GM12878 (cell line): ENCODE measurements at regions of chr9 and their contacts with region 1.

Region 1: DNA sequence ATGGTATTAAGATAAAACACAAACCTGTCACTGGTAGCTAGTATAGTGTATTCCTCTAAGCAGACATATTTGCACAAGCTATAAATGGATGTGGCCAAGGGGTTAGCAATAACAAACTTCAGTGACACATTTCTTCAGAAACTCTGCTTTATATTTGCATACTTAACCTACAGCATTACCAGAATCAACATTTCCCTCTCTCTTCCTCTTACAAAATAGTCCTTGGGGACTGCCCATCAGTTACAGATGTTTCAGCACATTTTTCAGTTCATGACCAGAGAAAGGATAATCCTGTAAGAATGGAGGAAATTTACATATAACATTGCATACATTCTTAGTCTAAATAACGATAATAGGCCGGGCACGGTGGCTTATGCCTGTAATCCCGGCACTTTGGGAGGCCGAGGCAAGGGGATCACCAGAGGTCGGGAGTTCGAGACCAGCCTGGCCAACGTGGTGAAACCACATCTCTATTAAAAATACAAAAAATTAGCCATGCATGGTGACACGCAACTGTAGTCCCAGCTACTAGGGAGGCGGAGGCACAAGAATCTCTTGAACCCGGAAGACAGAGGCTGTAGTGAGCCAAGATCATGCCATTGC is 25.3 kb upstream of the SLC1A1 start:
- DNase-seq: peak; percentile 96
- ATAC-seq: peak; percentile 97
- H3K4me3 ChIP-seq: peak overlapping the region; percentile 25; the same call in 1 of the 2 replicates
- H3K27ac ChIP-seq: peak overlapping the region; percentile 98
- H3K4me1 ChIP-seq: peaks cover 21% of the 10 kb centered on the region; the same call in 1 of the 2 replicates
- H3K27me3 ChIP-seq: no peaks in the 10 kb centered on the region
- CTCF ChIP-seq: no peak
- EP300 ChIP-seq: peak; percentile 95 to 98
- POLR2A ChIP-seq: no peak
- RAD21 ChIP-seq: no peak

Region 2: DNA sequence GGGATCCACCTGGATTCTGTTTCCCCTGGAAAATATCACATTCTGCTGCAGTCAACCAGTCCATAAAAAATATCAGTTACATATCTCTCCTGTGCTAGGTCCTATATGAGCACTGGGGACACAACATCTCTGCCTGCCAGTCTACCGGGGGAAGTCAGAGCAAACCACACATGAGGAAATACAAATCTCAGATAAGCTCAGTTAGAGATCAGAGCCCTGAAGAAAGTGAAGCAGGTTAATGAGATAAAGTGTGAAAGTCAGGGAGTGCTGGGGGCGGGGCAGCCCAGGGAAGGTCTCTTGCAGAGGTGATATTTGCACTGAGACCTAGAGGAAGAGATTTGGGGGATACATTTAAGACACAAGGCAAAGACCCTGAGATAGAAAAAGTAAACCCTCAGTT is 42.5 kb before region 1 on chr9:
- CTCF ChIA-PET with region 1: interaction called, 3 read pairs
- POLR2A ChIA-PET with region 1: no interaction called
- RAD21 ChIA-PET with region 1: no interaction called
- SMC1A ChIA-PET with region 1: interaction called, 5 read pairs
- in situ Hi-C with region 1: no loop called
- intact Hi-C with region 1: loop called (anchors 2 kb)
- DNase-seq: no peak
- ATAC-seq: peak; percentile 87
- H3K4me3 ChIP-seq: no peak overlapping the region
- H3K27ac ChIP-seq: no peak overlapping the region; the same call in 1 of the 2 replicates
- H3K4me1 ChIP-seq: peaks cover 25% of the 10 kb centered on the region
- H3K27me3 ChIP-seq: no peaks in the 10 kb centered on the region
- CTCF ChIP-seq: no peak
- EP300 ChIP-seq: no peak
- POLR2A ChIP-seq: no peak
- RAD21 ChIP-seq: peak; percentile 25; the same call in 1 of the 2 replicates

Region 3: GRCh38 chr9:4515958-4516375 is 51.0 kb after region 1 on chr9:
- CTCF ChIA-PET with region 1: interaction called, 3 read pairs
- POLR2A ChIA-PET with region 1: no interaction called
- RAD21 ChIA-PET with region 1: interaction called, 8 read pairs
- SMC1A ChIA-PET with region 1: interaction called, 15 read pairs
- in situ Hi-C with region 1: no loop called
- intact Hi-C with region 1: no loop called
- DNase-seq: peak; percentile 43
- ATAC-seq: peak; percentile 69
- H3K4me3 ChIP-seq: no peak overlapping the region
- H3K27ac ChIP-seq: peak overlapping the region; percentile 75
- H3K4me1 ChIP-seq: peaks cover 46% of the 10 kb centered on the region
- H3K27me3 ChIP-seq: no peaks in the 10 kb centered on the region
- CTCF ChIP-seq: no peak
- EP300 ChIP-seq: peak in 1 of 2 experiments; percentile 44; a peak in 1 of 4 replicates
- POLR2A ChIP-seq: no peak
- RAD21 ChIP-seq: no peak

Region 4: DNA sequence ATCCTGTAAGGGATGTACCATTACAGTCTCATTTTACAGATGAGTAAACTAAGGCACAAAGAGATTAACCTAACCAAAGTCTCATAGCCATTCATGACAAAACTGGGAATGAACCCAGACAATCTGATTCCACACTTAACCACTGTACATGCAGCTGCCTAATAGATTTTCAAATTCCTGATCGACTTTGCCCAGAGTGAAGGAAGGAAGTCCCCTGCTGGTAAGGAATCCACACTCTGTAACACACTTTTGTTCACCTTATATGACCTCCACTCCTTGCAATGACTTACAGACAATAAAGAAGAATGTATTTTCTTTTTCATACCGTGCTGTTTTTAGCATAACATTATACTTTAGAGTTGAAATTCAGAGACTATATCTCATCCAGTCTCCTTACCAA is 165.8 kb after region 1 on chr9:
- CTCF ChIA-PET with region 1: no interaction called
- POLR2A ChIA-PET with region 1: no interaction called
- RAD21 ChIA-PET with region 1: no interaction called
- SMC1A ChIA-PET with region 1: no interaction called
- in situ Hi-C with region 1: no loop called
- intact Hi-C with region 1: no loop called
- DNase-seq: no peak
- ATAC-seq: no peak
- H3K4me3 ChIP-seq: no peak overlapping the region
- H3K27ac ChIP-seq: no peak overlapping the region
- H3K4me1 ChIP-seq: no peaks in the 10 kb centered on the region
- H3K27me3 ChIP-seq: no peaks in the 10 kb centered on the region
- CTCF ChIP-seq: no peak
- EP300 ChIP-seq: no peak
- POLR2A ChIP-seq: no peak
- RAD21 ChIP-seq: no peak

Region 5: DNA sequence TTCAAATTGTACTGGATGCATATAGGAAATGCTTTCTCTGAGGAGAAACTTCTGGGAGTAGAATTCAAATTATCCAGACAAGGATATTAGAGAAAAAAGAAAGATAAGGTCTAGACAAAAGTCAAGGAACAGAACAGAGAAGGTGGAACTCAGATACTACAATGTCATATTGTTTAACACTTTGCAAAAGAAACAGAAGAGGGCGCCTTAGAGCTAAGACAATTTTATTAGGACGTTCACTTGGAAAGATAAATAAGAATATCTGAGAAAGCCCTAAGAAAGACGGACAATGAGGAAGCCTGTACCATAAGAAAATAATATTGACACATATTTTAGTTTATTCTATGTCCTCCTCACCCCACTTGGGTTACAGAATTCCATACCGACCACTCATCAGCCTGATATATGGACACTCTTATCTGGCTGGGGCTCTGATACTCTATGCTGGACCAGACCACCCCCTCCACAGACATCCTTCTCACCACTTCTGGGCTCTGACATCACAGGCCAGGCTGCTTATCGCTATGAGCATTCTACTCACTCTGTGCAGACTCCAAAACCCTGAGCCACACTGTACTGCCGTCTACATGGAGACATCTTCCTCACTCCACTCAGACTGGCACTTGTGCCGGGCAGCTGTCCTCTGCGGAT is 285.1 kb after region 1 on chr9:
- CTCF ChIA-PET with region 1: no interaction called
- POLR2A ChIA-PET with region 1: no interaction called
- RAD21 ChIA-PET with region 1: no interaction called
- SMC1A ChIA-PET with region 1: no interaction called
- in situ Hi-C with region 1: no loop called
- intact Hi-C with region 1: no loop called
- DNase-seq: no peak
- ATAC-seq: peak; percentile 86
- H3K4me3 ChIP-seq: no peak overlapping the region
- H3K27ac ChIP-seq: no peak overlapping the region
- H3K4me1 ChIP-seq: peaks cover 4% of the 10 kb centered on the region; the same call in 1 of the 2 replicates
- H3K27me3 ChIP-seq: no peaks in the 10 kb centered on the region
- CTCF ChIP-seq: peak; percentile 54 to 59 (median 58); a peak in 5 of 6 replicates
- EP300 ChIP-seq: no peak
- POLR2A ChIP-seq: no peak
- RAD21 ChIP-seq: peak; percentile 72